ENCODE measurements at regions of chr3 and their contacts with region 1.

Region 1: GRCh38 chr3:66938338-66938963 is 59.7 kb upstream of the KBTBD8 start:
- DNase-seq: no peak
- H3K4me3 ChIP-seq: no peak overlapping the region
- CTCF ChIP-seq: peak; percentile 68

Region 2: GRCh38 chr3:66242788-66243464 is 695.5 kb before region 1 on chr3:
- CTCF ChIA-PET with region 1: no interaction called
- POLR2A ChIA-PET with region 1: no interaction called
- DNase-seq: no peak
- H3K4me3 ChIP-seq: no peak overlapping the region
- CTCF ChIP-seq: no peak

Region 3: DNA sequence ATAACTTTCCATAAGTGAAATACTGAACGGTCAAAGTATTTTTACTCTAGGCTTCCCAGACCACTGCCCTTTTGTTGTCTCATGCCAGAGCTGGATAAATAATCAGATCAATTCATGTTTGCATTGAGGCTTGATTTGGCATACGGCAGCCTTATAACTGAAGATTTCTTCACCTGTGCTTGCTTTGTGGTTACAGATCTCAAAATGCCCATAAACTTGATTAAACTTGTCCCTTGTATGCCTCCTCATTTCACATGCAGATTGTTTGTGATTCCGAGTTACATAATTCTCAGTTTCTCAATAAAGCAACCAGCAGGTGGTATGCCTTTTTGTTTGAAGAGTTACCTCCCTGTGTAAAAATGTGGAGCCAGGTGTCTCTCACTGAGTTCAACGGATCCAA is 226.2 kb before region 1 on chr3:
- CTCF ChIA-PET with region 1: no interaction called
- POLR2A ChIA-PET with region 1: no interaction called
- DNase-seq: no peak
- H3K4me3 ChIP-seq: no peak overlapping the region
- CTCF ChIP-seq: no peak

Region 4: DNA sequence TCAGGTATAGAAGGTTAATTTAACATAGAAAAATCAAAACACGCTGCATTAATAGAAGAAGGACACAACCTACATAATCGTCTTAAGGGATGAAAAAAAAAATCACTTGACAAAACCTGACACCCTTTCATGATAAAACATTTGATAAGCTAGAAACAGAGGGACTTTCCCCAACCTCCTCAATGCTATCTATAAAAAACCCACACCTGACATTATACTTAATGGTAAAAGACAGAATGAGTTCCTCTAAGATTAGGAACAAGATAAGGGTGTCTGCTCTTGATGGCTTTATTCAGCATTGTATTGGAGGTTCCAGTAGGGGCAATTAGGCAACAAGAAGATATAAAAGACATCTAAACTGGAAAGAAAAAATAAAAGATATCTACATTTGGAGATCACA is 10.2 kb before region 1 on chr3:
- CTCF ChIA-PET with region 1: interaction called, 12 read pairs
- POLR2A ChIA-PET with region 1: no interaction called
- DNase-seq: no peak
- H3K4me3 ChIP-seq: no peak overlapping the region
- CTCF ChIP-seq: no peak

Region 5: DNA sequence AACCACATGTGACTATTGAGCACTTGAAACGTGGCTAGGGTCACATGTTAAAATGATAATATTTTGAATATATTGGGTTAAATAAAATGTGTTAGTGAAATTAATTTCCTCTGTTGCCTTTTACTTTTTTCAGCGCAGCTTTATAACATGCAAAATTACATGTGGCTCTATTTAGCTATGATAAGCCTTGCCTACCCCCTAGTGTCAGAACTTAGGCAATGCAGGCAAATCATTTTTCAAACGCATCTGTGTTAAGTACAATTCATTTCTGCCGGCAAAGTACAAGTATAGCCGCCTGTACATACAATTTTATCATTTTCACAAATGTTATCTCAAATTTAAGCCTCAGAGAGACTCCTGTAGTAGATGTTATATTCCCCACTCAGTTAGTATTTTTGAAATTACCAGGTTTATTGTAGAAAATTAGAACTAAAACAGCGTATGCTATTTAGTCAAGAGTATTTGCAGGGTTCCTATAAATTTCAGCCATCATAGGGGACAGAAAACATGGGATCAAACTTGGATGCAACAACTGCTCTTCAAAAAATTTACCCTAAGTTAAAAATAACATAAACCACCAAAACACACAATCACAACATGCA is 1937.8 kb after region 1 on chr3:
- CTCF ChIA-PET with region 1: interaction called, 48 read pairs
- POLR2A ChIA-PET with region 1: no interaction called
- DNase-seq: peak; percentile 26
- H3K4me3 ChIP-seq: no peak overlapping the region
- CTCF ChIP-seq: peak; percentile 75

Region 6: DNA sequence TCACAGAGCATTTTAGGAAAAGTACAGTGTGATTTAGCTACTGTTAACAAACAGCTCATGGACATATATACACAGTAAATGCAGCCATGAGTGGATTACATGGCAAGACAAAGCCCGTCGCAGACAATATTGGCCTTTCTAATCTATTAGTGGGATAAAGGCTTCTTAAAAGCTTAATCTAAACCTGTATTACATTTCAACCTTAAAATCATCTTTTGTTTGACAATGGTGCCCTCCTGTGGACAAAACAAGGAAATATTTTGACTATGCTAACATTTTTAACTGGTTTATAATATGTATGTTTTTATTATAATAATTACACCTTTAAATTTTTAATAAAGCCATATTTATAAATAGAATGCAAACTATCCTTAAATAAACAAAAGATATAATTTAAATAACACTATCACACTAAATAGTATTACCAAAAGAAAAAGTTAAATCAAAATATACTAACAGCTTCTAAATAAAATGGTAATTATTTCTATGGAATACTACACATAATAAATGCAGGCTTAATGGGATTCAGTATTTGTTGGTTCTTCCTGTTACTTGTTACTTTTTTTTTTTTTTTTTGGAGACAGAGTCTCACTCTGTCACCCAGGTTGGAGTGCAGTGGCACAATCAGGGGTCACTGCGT is 1955.3 kb after region 1 on chr3:
- CTCF ChIA-PET with region 1: interaction called, 18 read pairs
- POLR2A ChIA-PET with region 1: no interaction called
- DNase-seq: no peak
- H3K4me3 ChIP-seq: no peak overlapping the region
- CTCF ChIP-seq: peak; percentile 22

Measured in AG04449 (cell line).